ENCODE measurements at regions of chr3 and their contacts with region 1.

Region 1: GRCh38 chr3:51642462-51642861 is 28.6 kb upstream of the TEX264 start:
- DNase-seq: no peak
- ATAC-seq: no peak
- H3K4me3 ChIP-seq: no peak overlapping the region
- H3K27ac ChIP-seq: no peak overlapping the region
- H3K4me1 ChIP-seq: no peaks in the 10 kb centered on the region
- H3K27me3 ChIP-seq: no peaks in the 10 kb centered on the region
- CTCF ChIP-seq: peak in 8 of 9 donors; percentile 5 to 55 (median 38)

Region 2: GRCh38 chr3:51434746-51435327 is 207.6 kb before region 1 on chr3:
- intact Hi-C with region 1: no loop called
- DNase-seq: peak in 1 of 2 donors; percentile 37
- ATAC-seq: peak in 7 of 8 donors; percentile 55 to 81 (median 70)
- H3K4me3 ChIP-seq: no peak overlapping the region
- H3K27ac ChIP-seq: no peak overlapping the region
- H3K4me1 ChIP-seq: peaks cover 0 to 6% (median 0%) of the 10 kb centered on the region in 9 donors
- H3K27me3 ChIP-seq: no peaks in the 10 kb centered on the region
- CTCF ChIP-seq: peak; percentile 46 to 82 (median 64)

Region 3: DNA sequence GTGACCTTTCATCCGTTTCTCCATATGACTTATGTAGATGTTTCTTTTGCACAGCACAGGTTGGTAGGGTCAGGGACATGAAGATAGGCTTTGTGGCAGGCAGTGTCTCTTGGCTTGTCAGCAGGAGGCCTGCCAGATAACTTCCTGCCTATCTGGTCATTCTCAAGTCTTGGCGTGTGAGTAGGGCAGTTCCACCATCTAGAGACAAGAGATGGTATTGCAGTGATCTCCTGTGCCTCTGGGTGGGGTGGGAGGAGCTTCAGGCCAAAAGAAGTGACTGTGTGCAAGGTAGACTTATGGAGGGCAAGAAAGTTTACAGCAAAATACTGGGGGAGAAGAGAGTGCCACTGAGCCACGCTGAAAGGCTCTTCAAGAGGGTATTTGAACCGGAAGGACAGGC is 39.6 kb after region 1 on chr3:
- intact Hi-C with region 1: loop called in 1 of 10 experiments (anchors 5 kb)
- DNase-seq: peak in 1 of 2 donors; percentile 81
- ATAC-seq: peak; percentile 45 to 81 (median 67)
- H3K4me3 ChIP-seq: peak overlapping the region in 1 of 10 donors; percentile 20
- H3K27ac ChIP-seq: peak overlapping the region in 9 of 10 donors; percentile 24 to 96 (median 93)
- H3K4me1 ChIP-seq: peaks cover 51 to 98% (median 88%) of the 10 kb centered on the region in 9 donors
- H3K27me3 ChIP-seq: no peaks in the 10 kb centered on the region
- CTCF ChIP-seq: peak; percentile 61 to 85 (median 83)

Region 4: DNA sequence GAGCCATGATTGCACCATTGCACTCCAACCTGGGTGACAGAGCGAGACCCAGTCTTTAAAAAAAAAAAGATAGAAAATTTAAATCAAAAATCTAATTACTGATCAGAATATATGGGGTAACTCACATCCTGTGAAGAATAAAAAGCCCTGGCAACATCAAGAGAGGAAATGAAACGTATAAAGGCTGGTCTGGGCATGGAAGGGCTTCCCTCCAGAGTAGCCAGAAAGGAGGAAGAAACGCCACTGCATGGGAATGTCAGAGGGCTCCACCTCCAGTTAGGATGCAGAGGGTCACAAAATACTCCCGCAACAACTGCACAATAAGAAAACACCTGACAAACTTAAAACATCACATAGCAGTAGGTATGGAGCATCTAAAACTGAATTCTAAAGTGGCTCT is 265.6 kb after region 1 on chr3:
- intact Hi-C with region 1: no loop called
- DNase-seq: no peak
- ATAC-seq: no peak
- H3K4me3 ChIP-seq: no peak overlapping the region
- H3K27ac ChIP-seq: no peak overlapping the region
- H3K4me1 ChIP-seq: no peaks in the 10 kb centered on the region
- H3K27me3 ChIP-seq: no peaks in the 10 kb centered on the region
- CTCF ChIP-seq: no peak

Region 5: GRCh38 chr3:51974963-51975851 is 332.7 kb after region 1 on chr3 and contains the start of gene ABHD14A:
- intact Hi-C with region 1: no loop called
- DNase-seq: peak; percentile 56 to 81
- ATAC-seq: peak; percentile 73 to 83 (median 78)
- H3K4me3 ChIP-seq: peak within 1 kb of the TSS; percentile 46 to 87 (median 68)
- H3K27ac ChIP-seq: peak within 1 kb of the TSS; percentile 93 to 98 (median 96)
- H3K4me1 ChIP-seq: peaks cover 10 to 40% (median 31%) of the 10 kb centered on the region in 9 donors
- H3K27me3 ChIP-seq: no peaks in the 10 kb centered on the region
- CTCF ChIP-seq: peak in 2 of 9 donors; percentile 7 to 8
- total RNA-seq, gene ABHD14A: 19.3 to 38.6 (median 23.6) TPM